Naive thymus-derived CD4-positive, alpha-beta T cell (primary cell): ENCODE measurements at regions of chr2 and their contacts with region 1.

Region 1: GRCh38 chr2:234451852-234452625 is 44.8 kb downstream of the ARL4C start:
- DNase-seq: peak in 7 of 9 donors; percentile 30 to 74 (median 62)
- ATAC-seq: peak; percentile 41
- H3K4me3 ChIP-seq: peak overlapping the region; percentile 71
- H3K4me3 Mint-ChIP-seq: peak overlapping the region; percentile 83 to 99 (median 91)
- H3K27ac ChIP-seq: peak overlapping the region; percentile 96
- H3K27ac Mint-ChIP-seq: peak overlapping the region; percentile 90 to 100 (median 96)
- H3K4me1 ChIP-seq: peaks cover 66 to 70% of the 10 kb centered on the region in 2 donors
- H3K4me1 Mint-ChIP-seq: peaks cover 32 to 88% (median 84%) of the 10 kb centered on the region in 7 donors
- H3K27me3 ChIP-seq: no peaks in the 10 kb centered on the region
- H3K27me3 Mint-ChIP-seq: no peaks in the 10 kb centered on the region

Region 2: GRCh38 chr2:234257856-234258561 is 194.0 kb before region 1 on chr2:
- CTCF ChIA-PET with region 1: no interaction called
- POLR2A ChIA-PET with region 1: no interaction called
- intact Hi-C with region 1: no loop called
- DNase-seq: peak in 1 of 9 donors; percentile 42
- ATAC-seq: peak; percentile 34
- H3K4me3 ChIP-seq: no peak overlapping the region
- H3K4me3 Mint-ChIP-seq: no peak overlapping the region
- H3K27ac ChIP-seq: no peak overlapping the region
- H3K27ac Mint-ChIP-seq: peak overlapping the region in 1 of 9 donors; percentile 35
- H3K4me1 ChIP-seq: no peaks in the 10 kb centered on the region
- H3K4me1 Mint-ChIP-seq: peaks cover 0 to 30% (median 20%) of the 10 kb centered on the region in 7 donors
- H3K27me3 ChIP-seq: no peaks in the 10 kb centered on the region
- H3K27me3 Mint-ChIP-seq: no peaks in the 10 kb centered on the region

Region 3: GRCh38 chr2:234355021-234355720 is 96.9 kb before region 1 on chr2:
- CTCF ChIA-PET with region 1: no interaction called
- POLR2A ChIA-PET with region 1: no interaction called
- intact Hi-C with region 1: no loop called
- DNase-seq: no peak
- ATAC-seq: no peak
- H3K4me3 ChIP-seq: no peak overlapping the region
- H3K4me3 Mint-ChIP-seq: peak overlapping the region in 1 of 10 donors; percentile 48
- H3K27ac ChIP-seq: no peak overlapping the region
- H3K27ac Mint-ChIP-seq: peak overlapping the region in 7 of 9 donors; percentile 19 to 85 (median 68)
- H3K4me1 ChIP-seq: peaks cover 6 to 13% of the 10 kb centered on the region in 2 donors
- H3K4me1 Mint-ChIP-seq: peaks cover 9 to 36% (median 31%) of the 10 kb centered on the region in 7 donors
- H3K27me3 ChIP-seq: no peaks in the 10 kb centered on the region
- H3K27me3 Mint-ChIP-seq: no peaks in the 10 kb centered on the region

Region 4: DNA sequence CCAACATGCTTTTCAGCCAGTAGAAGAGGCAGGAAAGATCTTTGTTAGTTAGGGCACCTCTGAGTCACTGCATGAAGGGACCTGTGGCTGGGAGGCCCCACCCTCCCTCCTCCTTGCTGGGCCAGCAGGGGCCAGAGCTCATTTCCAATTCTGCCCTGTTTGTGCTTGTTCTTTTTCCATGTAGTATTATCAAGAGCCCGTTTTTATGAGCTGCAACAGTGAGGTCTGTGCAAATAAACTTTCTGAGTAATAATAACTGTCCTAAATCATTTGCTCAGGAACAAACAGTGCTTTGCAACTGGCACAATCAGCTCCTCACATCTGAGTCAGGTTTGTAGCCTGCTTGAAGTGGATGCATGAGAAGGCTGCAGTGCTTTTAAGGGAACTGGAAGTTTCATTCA is 83.2 kb before region 1 on chr2:
- CTCF ChIA-PET with region 1: interaction called, 6 read pairs
- POLR2A ChIA-PET with region 1: interaction called, 22 read pairs
- intact Hi-C with region 1: no loop called
- DNase-seq: peak in 7 of 9 donors; percentile 13 to 43 (median 28)
- ATAC-seq: peak; percentile 78
- H3K4me3 ChIP-seq: no peak overlapping the region
- H3K4me3 Mint-ChIP-seq: peak overlapping the region; percentile 6 to 80 (median 46)
- H3K27ac ChIP-seq: peak overlapping the region; percentile 48
- H3K27ac Mint-ChIP-seq: peak overlapping the region; percentile 81 to 98 (median 90)
- H3K4me1 ChIP-seq: peaks cover 31 to 71% of the 10 kb centered on the region in 2 donors
- H3K4me1 Mint-ChIP-seq: peaks cover 47 to 86% (median 80%) of the 10 kb centered on the region in 7 donors
- H3K27me3 ChIP-seq: no peaks in the 10 kb centered on the region
- H3K27me3 Mint-ChIP-seq: no peaks in the 10 kb centered on the region

Region 5: GRCh38 chr2:234437642-234438304 is 14.3 kb before region 1 on chr2:
- CTCF ChIA-PET with region 1: interaction called, 6 read pairs
- POLR2A ChIA-PET with region 1: interaction called, 643 read pairs
- intact Hi-C with region 1: no loop called
- DNase-seq: no peak
- ATAC-seq: no peak
- H3K4me3 ChIP-seq: peak overlapping the region; percentile 46
- H3K4me3 Mint-ChIP-seq: peak overlapping the region; percentile 15 to 81 (median 73)
- H3K27ac ChIP-seq: peak overlapping the region; percentile 75
- H3K27ac Mint-ChIP-seq: peak overlapping the region; percentile 64 to 100 (median 95)
- H3K4me1 ChIP-seq: peaks cover 9 to 74% of the 10 kb centered on the region in 2 donors
- H3K4me1 Mint-ChIP-seq: peaks cover 54 to 98% (median 89%) of the 10 kb centered on the region in 7 donors
- H3K27me3 ChIP-seq: no peaks in the 10 kb centered on the region
- H3K27me3 Mint-ChIP-seq: no peaks in the 10 kb centered on the region

Region 6: GRCh38 chr2:234483568-234484251 is 31.7 kb after region 1 on chr2:
- CTCF ChIA-PET with region 1: interaction called, 19 read pairs
- POLR2A ChIA-PET with region 1: interaction called, 153 read pairs
- intact Hi-C with region 1: loop called (anchors 1 kb)
- DNase-seq: peak; percentile 50 to 88 (median 80)
- ATAC-seq: peak; percentile 89
- H3K4me3 ChIP-seq: peak overlapping the region; percentile 28
- H3K4me3 Mint-ChIP-seq: peak overlapping the region; percentile 60 to 81 (median 67)
- H3K27ac ChIP-seq: peak overlapping the region; percentile 94
- H3K27ac Mint-ChIP-seq: peak overlapping the region; percentile 87 to 99 (median 95)
- H3K4me1 ChIP-seq: peaks cover 63 to 72% of the 10 kb centered on the region in 2 donors
- H3K4me1 Mint-ChIP-seq: peaks cover 44 to 95% (median 84%) of the 10 kb centered on the region in 7 donors
- H3K27me3 ChIP-seq: no peaks in the 10 kb centered on the region
- H3K27me3 Mint-ChIP-seq: no peaks in the 10 kb centered on the region

Region 7: GRCh38 chr2:234679741-234680687 is 228.0 kb after region 1 on chr2:
- CTCF ChIA-PET with region 1: no interaction called
- POLR2A ChIA-PET with region 1: no interaction called
- intact Hi-C with region 1: no loop called
- DNase-seq: no peak
- ATAC-seq: no peak
- H3K4me3 ChIP-seq: no peak overlapping the region
- H3K4me3 Mint-ChIP-seq: no peak overlapping the region
- H3K27ac ChIP-seq: no peak overlapping the region
- H3K27ac Mint-ChIP-seq: no peak overlapping the region
- H3K4me1 ChIP-seq: no peaks in the 10 kb centered on the region
- H3K4me1 Mint-ChIP-seq: no peaks in the 10 kb centered on the region
- H3K27me3 ChIP-seq: no peaks in the 10 kb centered on the region
- H3K27me3 Mint-ChIP-seq: peaks cover 0 to 6% (median 2%) of the 10 kb centered on the region in 5 donors

Region 8: GRCh38 chr2:234741976-234742375 is 289.9 kb after region 1 on chr2:
- CTCF ChIA-PET with region 1: no interaction called
- POLR2A ChIA-PET with region 1: no interaction called
- intact Hi-C with region 1: no loop called
- DNase-seq: no peak
- ATAC-seq: no peak
- H3K4me3 ChIP-seq: no peak overlapping the region
- H3K4me3 Mint-ChIP-seq: no peak overlapping the region
- H3K27ac ChIP-seq: no peak overlapping the region
- H3K27ac Mint-ChIP-seq: no peak overlapping the region
- H3K4me1 ChIP-seq: no peaks in the 10 kb centered on the region
- H3K4me1 Mint-ChIP-seq: no peaks in the 10 kb centered on the region
- H3K27me3 ChIP-seq: peaks cover 0 to 4% of the 10 kb centered on the region in 2 donors
- H3K27me3 Mint-ChIP-seq: peaks cover 10 to 56% (median 40%) of the 10 kb centered on the region in 5 donors